Posterior vena cava (tissue), 2 donors: ENCODE measurements at regions of chr2 and their contacts with region 1.

Region 1: GRCh38 chr2:233620204-233620603 is 2.8 kb downstream of the UGT1A8 start:
- DNase-seq: no peak

Region 2: GRCh38 chr2:233185963-233186362 is 434.2 kb before region 1 on chr2:
- intact Hi-C with region 1: no loop called
- DNase-seq: no peak

Region 3: GRCh38 chr2:233593201-233593600 is 27.0 kb before region 1 on chr2:
- intact Hi-C with region 1: no loop called
- DNase-seq: no peak

Region 4: DNA sequence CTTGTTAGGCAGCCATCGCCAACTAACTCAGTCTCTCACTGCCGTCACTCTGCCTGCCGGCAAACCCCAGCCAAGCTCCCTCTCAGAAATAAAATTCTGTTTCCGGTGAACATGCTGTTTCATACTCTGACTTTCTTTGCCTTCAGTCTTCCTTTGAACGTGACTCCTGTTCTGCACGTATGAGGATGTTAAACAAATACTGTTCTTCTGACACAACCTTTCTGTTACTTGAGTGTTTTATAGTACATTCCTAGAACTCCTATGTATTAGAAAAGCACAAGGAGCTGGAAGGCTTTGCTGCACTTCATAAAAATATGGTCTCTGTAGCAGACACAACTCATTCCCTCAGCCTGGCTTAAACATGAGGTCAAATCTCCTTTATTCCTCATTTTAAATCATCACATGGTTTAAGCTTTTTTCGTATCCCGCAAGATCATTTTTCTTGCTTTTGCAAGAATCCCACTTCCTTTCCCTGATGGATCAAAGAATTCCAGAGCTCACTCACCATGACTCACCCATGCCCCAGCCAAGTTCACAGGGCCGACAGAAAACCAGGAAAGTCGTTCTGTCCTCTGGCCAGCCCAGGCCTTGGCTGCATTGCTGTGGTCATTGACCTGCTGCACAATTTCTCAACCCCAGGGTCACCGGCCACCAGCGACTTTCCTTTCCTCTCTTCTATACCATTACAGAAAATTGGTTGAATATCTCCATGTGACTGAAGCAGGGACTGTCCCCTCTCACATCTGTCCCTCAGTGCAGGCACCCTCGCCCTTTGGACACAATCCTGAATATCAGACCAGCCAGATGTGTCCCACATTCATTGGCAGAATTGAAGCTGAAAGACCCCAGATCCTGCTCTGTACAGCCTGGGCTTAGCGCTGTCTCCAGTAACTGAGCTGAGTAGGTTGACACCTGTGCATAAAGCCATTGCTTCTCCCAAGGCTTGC is 1059.8 kb after region 1 on chr2:
- intact Hi-C with region 1: loop called in 1 of 2 experiments (anchors 10 kb)
- DNase-seq: peak; percentile 92